Common myeloid progenitor, CD34-positive (primary cell): ENCODE measurements at regions of chr7 and their contacts with region 1.

Region 1: GRCh38 chr7:50369143-50370026 is 64.9 kb downstream of the IKZF1 start:
- DNase-seq: peak; percentile 87 to 93 (median 90)
- H3K4me3 ChIP-seq: no peak overlapping the region
- H3K27ac ChIP-seq: no peak overlapping the region
- H3K4me1 ChIP-seq: peaks cover 10 to 26% (median 14%) of the 10 kb centered on the region in 4 experiments
- H3K27me3 ChIP-seq: no peaks in the 10 kb centered on the region

Region 2: DNA sequence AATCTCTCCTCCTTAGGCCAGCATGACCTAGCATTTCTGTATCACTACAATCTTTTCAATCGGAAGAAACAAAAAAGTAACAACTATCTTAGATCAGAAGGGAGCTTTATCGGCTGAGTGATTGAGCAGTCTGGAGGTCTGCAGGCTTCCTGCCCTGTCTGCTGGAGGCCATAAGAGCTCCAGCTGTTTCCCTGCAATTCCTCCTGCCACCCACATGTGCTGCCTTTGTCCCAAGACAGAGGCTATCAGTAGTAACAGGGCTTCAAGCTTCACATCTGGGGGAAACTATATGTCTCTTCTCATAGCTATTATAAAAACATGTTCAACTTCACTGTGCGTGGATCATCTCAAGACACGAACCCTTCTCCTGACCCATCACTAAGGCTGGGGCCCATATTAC is 666.0 kb before region 1 on chr7:
- CTCF ChIA-PET with region 1: no interaction called
- POLR2A ChIA-PET with region 1: no interaction called
- DNase-seq: peak; percentile 44 to 88 (median 78)
- H3K4me3 ChIP-seq: peak overlapping the region in 2 of 7 experiments; percentile 0 to 9
- H3K27ac ChIP-seq: no peak overlapping the region
- H3K4me1 ChIP-seq: peaks cover 0 to 16% (median 0%) of the 10 kb centered on the region in 4 experiments
- H3K27me3 ChIP-seq: no peaks in the 10 kb centered on the region

Region 3: GRCh38 chr7:50142425-50143017 is 226.9 kb before region 1 on chr7:
- CTCF ChIA-PET with region 1: interaction called, 46 read pairs
- POLR2A ChIA-PET with region 1: interaction called, 4 read pairs
- DNase-seq: peak; percentile 65 to 84 (median 76)
- H3K4me3 ChIP-seq: peak overlapping the region in 1 of 7 experiments; percentile 44
- H3K27ac ChIP-seq: no peak overlapping the region
- H3K4me1 ChIP-seq: peaks cover 2 to 22% (median 12%) of the 10 kb centered on the region in 4 experiments
- H3K27me3 ChIP-seq: no peaks in the 10 kb centered on the region

Region 4: GRCh38 chr7:50227726-50228125 is 141.7 kb before region 1 on chr7:
- CTCF ChIA-PET with region 1: interaction called, 18 read pairs
- POLR2A ChIA-PET with region 1: no interaction called
- DNase-seq: peak; percentile 39 to 82 (median 68)
- H3K4me3 ChIP-seq: peak overlapping the region in 4 of 7 experiments; percentile 29 to 62 (median 46)
- H3K27ac ChIP-seq: peak overlapping the region; percentile 48 to 68
- H3K4me1 ChIP-seq: peaks cover 15 to 34% (median 25%) of the 10 kb centered on the region in 4 experiments
- H3K27me3 ChIP-seq: no peaks in the 10 kb centered on the region

Region 5: GRCh38 chr7:50335795-50336754 is 33.3 kb before region 1 on chr7:
- CTCF ChIA-PET with region 1: interaction called, 25 read pairs
- POLR2A ChIA-PET with region 1: interaction called, 4 read pairs
- DNase-seq: peak; percentile 69 to 91 (median 91)
- H3K4me3 ChIP-seq: peak overlapping the region in 2 of 7 experiments; percentile 1 to 12
- H3K27ac ChIP-seq: peak overlapping the region; percentile 55 to 87
- H3K4me1 ChIP-seq: peaks cover 64 to 100% (median 97%) of the 10 kb centered on the region in 4 experiments
- H3K27me3 ChIP-seq: no peaks in the 10 kb centered on the region